PC-3 (cell line): ENCODE measurements at regions of chr2 and their contacts with region 1.

Region 1: DNA sequence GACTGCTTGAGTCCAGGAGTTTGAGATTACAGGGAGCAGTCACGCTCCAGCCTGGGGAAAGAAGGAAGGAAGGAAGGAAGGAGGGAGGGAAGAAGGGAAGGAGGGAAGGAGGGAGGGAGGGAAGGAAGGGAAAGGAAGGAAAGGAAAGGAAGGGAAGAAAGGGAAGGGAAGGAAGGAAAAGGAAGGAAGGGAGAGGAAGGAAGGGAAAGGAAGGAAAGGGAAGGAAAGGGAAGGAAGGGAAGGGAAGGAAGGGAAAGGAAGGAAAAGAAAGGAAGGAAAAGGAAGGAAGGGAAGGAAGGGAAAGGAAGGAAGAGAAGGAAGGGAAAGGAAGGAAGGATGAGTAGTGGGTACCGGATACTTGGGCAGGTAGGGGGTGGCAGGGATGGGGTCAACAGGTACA is 32.3 kb downstream of the GPR155 start:
- DNase-seq: no peak
- ATAC-seq: no peak
- H3K4me3 ChIP-seq: no peak overlapping the region
- H3K27ac ChIP-seq: no peak overlapping the region
- H3K4me1 ChIP-seq: no peaks in the 10 kb centered on the region
- H3K27me3 ChIP-seq: no peaks in the 10 kb centered on the region
- CTCF ChIP-seq: no peak

Region 2: DNA sequence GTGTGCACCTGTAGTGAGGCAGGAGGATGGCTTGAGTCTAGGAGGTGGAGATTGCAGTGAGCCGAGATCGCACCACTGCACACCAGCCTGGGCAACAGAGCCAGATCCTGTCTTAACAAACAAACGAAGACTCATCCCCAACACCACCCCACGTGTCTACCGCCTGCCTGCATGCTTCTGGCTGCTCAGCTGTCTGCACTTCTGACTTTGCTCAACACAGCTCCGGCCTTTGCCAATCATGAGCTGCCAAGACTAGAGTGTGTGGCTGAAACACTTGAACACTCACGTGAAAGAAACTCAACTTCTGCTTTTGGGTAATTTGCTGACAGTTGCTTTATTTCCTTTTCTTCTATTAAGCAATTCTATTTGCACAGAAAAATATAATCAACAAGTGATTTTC is 457.3 kb before region 1 on chr2:
- CTCF ChIA-PET with region 1: no interaction called
- POLR2A ChIA-PET with region 1: no interaction called
- intact Hi-C with region 1: no loop called
- DNase-seq: no peak
- ATAC-seq: no peak
- H3K4me3 ChIP-seq: no peak overlapping the region
- H3K27ac ChIP-seq: no peak overlapping the region
- H3K4me1 ChIP-seq: peaks cover 4% of the 10 kb centered on the region; the same call in 1 of the 2 replicates
- H3K27me3 ChIP-seq: no peaks in the 10 kb centered on the region
- CTCF ChIP-seq: no peak

Region 3: GRCh38 chr2:174442546-174443510 is 11.7 kb before region 1 on chr2:
- CTCF ChIA-PET with region 1: no interaction called
- POLR2A ChIA-PET with region 1: interaction called, 20 read pairs
- intact Hi-C with region 1: no loop called
- DNase-seq: peak; percentile 89
- ATAC-seq: peak; percentile 99
- H3K4me3 ChIP-seq: no peak overlapping the region
- H3K27ac ChIP-seq: no peak overlapping the region
- H3K4me1 ChIP-seq: peaks cover 16% of the 10 kb centered on the region
- H3K27me3 ChIP-seq: no peaks in the 10 kb centered on the region
- CTCF ChIP-seq: no peak

Region 4: DNA sequence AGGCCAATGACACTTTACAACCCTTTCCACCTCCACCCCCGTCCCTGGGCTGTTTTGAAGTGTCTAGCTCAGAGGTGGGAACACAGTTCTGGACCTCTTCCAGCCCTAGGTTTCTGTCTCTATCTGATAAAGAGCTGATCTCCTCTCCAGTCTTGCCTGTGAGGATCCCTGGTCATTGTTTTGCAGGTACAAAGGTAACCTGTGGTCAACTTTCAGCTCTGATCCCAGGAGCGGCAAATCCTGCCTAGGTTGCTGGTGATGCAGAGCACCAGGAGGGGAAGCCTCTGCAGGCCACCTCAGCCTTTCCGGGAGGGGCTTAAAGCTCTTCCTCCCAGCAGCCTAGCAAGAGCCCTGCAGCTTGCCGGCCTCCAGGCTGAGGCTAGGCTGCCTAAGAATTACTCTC is 212.8 kb after region 1 on chr2:
- CTCF ChIA-PET with region 1: no interaction called
- POLR2A ChIA-PET with region 1: no interaction called
- intact Hi-C with region 1: no loop called
- DNase-seq: no peak
- ATAC-seq: no peak
- H3K4me3 ChIP-seq: no peak overlapping the region
- H3K27ac ChIP-seq: no peak overlapping the region
- H3K4me1 ChIP-seq: peaks cover 6% of the 10 kb centered on the region
- H3K27me3 ChIP-seq: no peaks in the 10 kb centered on the region
- CTCF ChIP-seq: no peak